CD8-positive, alpha-beta memory T cell (primary cell): ENCODE measurements at regions of chr17 and their contacts with region 1.

Region 1: GRCh38 chr17:63425482-63425881 is 20.6 kb downstream of the CYB561 start:
- DNase-seq: peak; percentile 50 to 78 (median 62)
- H3K4me3 ChIP-seq: no peak overlapping the region
- H3K4me3 Mint-ChIP-seq: peak overlapping the region; percentile 47 to 74 (median 62)
- H3K27ac ChIP-seq: no peak overlapping the region
- H3K27ac Mint-ChIP-seq: peak overlapping the region in 7 of 8 donors; percentile 31 to 81 (median 68)
- H3K4me1 ChIP-seq: peaks cover 36% of the 10 kb centered on the region
- H3K4me1 Mint-ChIP-seq: peaks cover 35 to 51% (median 37%) of the 10 kb centered on the region in 3 donors
- H3K27me3 ChIP-seq: no peaks in the 10 kb centered on the region
- H3K27me3 Mint-ChIP-seq: no peaks in the 10 kb centered on the region

Region 2: DNA sequence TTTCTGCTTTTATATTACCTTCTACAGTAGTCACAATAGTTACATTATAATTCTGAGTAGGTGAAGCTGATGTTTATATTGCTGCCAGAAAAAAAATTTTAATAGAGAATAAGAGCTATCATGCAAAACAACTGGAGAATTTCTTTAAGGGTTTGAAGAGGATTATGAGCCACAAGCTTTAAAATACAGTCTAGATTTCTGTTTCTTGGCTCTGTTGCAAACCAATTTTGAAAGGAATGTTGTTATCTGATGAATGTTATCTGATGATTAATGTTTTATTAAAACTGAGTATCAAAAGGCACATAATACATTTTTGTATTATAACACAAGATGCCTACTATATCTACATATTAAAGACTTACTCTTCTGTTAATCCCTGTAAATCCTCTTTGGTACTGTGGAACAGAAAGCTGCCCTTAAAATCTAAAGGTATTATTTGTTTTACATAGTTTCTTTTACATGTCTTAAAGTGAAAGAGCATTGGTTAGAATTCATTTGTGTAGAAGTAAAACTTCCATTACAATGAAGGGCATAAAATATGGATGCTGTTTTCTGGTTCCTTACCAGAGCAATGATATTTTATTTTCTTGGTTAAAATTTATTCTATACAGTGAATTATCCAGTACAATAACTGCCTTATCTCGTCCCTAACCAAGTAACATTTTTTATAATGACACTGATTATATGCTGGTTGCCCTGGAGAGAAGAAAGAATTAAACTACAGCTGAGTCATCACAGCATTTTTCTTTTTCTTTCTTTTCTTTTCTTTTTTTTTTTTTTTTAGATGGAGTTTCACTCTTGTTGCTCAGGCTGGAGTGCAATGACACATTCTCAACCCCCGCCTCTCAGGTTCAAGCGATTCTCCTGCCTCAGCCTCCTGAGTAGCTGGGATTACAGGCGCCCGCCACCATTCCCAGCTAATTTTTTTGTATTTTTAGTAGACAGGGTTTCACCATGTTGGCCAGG is 253.8 kb before region 1 on chr17:
- CTCF ChIA-PET with region 1: no interaction called
- POLR2A ChIA-PET with region 1: no interaction called
- DNase-seq: no peak
- H3K4me3 ChIP-seq: no peak overlapping the region
- H3K4me3 Mint-ChIP-seq: no peak overlapping the region
- H3K27ac ChIP-seq: no peak overlapping the region
- H3K27ac Mint-ChIP-seq: no peak overlapping the region
- H3K4me1 ChIP-seq: no peaks in the 10 kb centered on the region
- H3K4me1 Mint-ChIP-seq: no peaks in the 10 kb centered on the region
- H3K27me3 ChIP-seq: no peaks in the 10 kb centered on the region
- H3K27me3 Mint-ChIP-seq: no peaks in the 10 kb centered on the region

Region 3: DNA sequence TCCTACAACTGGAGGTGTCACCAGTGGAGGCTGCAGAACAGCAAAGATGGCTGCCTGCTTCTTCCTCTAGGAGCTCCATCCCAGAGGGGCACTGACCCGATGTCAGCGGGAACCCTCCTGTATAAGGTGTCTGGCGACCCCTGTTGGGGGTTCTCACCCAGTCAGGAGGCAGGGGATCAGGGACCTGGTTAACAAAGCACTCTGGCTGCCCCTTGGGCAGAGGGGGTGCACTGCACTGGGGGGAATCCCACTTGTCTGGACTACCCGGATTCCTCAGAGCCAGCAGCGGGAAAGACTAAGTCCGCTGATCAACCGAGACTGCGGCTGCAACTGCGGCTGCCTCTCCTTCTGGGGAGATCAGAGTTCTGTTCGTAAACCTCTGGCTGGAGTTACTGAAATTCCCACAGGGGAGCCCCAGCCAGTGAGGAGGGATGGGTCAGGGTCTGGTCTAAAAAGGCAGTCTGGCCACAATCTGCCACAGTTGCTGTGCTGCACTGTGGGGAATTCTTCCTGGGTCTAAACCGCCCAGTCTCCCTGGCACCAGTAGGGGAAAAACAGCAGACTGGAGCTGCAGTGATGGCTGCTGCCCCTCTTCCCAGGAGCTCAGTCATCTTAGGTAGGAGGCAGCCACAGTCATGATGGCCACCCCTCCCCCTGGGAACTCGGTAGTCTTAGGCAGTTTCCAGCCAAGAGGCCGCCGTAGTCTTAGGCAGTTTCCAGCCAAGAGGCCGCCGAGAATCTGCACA is 192.7 kb before region 1 on chr17:
- CTCF ChIA-PET with region 1: no interaction called
- POLR2A ChIA-PET with region 1: no interaction called
- DNase-seq: no peak
- H3K4me3 ChIP-seq: no peak overlapping the region
- H3K4me3 Mint-ChIP-seq: no peak overlapping the region
- H3K27ac ChIP-seq: no peak overlapping the region
- H3K27ac Mint-ChIP-seq: no peak overlapping the region
- H3K4me1 ChIP-seq: no peaks in the 10 kb centered on the region
- H3K4me1 Mint-ChIP-seq: no peaks in the 10 kb centered on the region
- H3K27me3 ChIP-seq: no peaks in the 10 kb centered on the region
- H3K27me3 Mint-ChIP-seq: peaks cover 1 to 12% of the 10 kb centered on the region in 2 donors

Region 4: GRCh38 chr17:63356337-63356757 is 69.1 kb before region 1 on chr17:
- CTCF ChIA-PET with region 1: no interaction called
- POLR2A ChIA-PET with region 1: no interaction called
- DNase-seq: no peak
- H3K4me3 ChIP-seq: no peak overlapping the region
- H3K4me3 Mint-ChIP-seq: no peak overlapping the region
- H3K27ac ChIP-seq: no peak overlapping the region
- H3K27ac Mint-ChIP-seq: no peak overlapping the region
- H3K4me1 ChIP-seq: no peaks in the 10 kb centered on the region
- H3K4me1 Mint-ChIP-seq: no peaks in the 10 kb centered on the region
- H3K27me3 ChIP-seq: no peaks in the 10 kb centered on the region
- H3K27me3 Mint-ChIP-seq: peaks cover 0 to 3% of the 10 kb centered on the region in 2 donors

Region 5: GRCh38 chr17:63369233-63369632 is 56.2 kb before region 1 on chr17:
- CTCF ChIA-PET with region 1: no interaction called
- POLR2A ChIA-PET with region 1: no interaction called
- DNase-seq: no peak
- H3K4me3 ChIP-seq: no peak overlapping the region
- H3K4me3 Mint-ChIP-seq: no peak overlapping the region
- H3K27ac ChIP-seq: no peak overlapping the region
- H3K27ac Mint-ChIP-seq: no peak overlapping the region
- H3K4me1 ChIP-seq: no peaks in the 10 kb centered on the region
- H3K4me1 Mint-ChIP-seq: no peaks in the 10 kb centered on the region
- H3K27me3 ChIP-seq: no peaks in the 10 kb centered on the region
- H3K27me3 Mint-ChIP-seq: no peaks in the 10 kb centered on the region

Region 6: GRCh38 chr17:63406689-63407330 is 18.7 kb before region 1 on chr17:
- CTCF ChIA-PET with region 1: interaction called, 16 read pairs
- POLR2A ChIA-PET with region 1: interaction called, 8 read pairs
- DNase-seq: peak; percentile 33 to 74 (median 53)
- H3K4me3 ChIP-seq: no peak overlapping the region
- H3K4me3 Mint-ChIP-seq: no peak overlapping the region
- H3K27ac ChIP-seq: no peak overlapping the region
- H3K27ac Mint-ChIP-seq: peak overlapping the region in 4 of 8 donors; percentile 43 to 67 (median 48)
- H3K4me1 ChIP-seq: no peaks in the 10 kb centered on the region
- H3K4me1 Mint-ChIP-seq: peaks cover 2 to 8% (median 8%) of the 10 kb centered on the region in 3 donors
- H3K27me3 ChIP-seq: no peaks in the 10 kb centered on the region
- H3K27me3 Mint-ChIP-seq: no peaks in the 10 kb centered on the region

Region 7: GRCh38 chr17:63445979-63446691 is 20.7 kb after region 1 on chr17 and contains the start of gene CYB561:
- CTCF ChIA-PET with region 1: interaction called, 31 read pairs
- POLR2A ChIA-PET with region 1: interaction called, 17 read pairs
- DNase-seq: peak; percentile 59 to 86 (median 75)
- H3K4me3 ChIP-seq: peak within 1 kb of the TSS; percentile 65
- H3K4me3 Mint-ChIP-seq: peak within 1 kb of the TSS; percentile 82 to 98 (median 84)
- H3K27ac ChIP-seq: peak within 1 kb of the TSS; percentile 87
- H3K27ac Mint-ChIP-seq: peak within 1 kb of the TSS; percentile 90 to 99 (median 96)
- H3K4me1 ChIP-seq: peaks cover 20% of the 10 kb centered on the region
- H3K4me1 Mint-ChIP-seq: peaks cover 24 to 61% (median 36%) of the 10 kb centered on the region in 3 donors
- H3K27me3 ChIP-seq: no peaks in the 10 kb centered on the region
- H3K27me3 Mint-ChIP-seq: peaks cover 0 to 4% of the 10 kb centered on the region in 2 donors
- total RNA-seq, gene CYB561: 14.3 to 16.6 TPM

Region 8: GRCh38 chr17:63478791-63479494 is 53.5 kb after region 1 on chr17:
- CTCF ChIA-PET with region 1: interaction called, 206 read pairs
- POLR2A ChIA-PET with region 1: interaction called, 9 read pairs
- DNase-seq: peak; percentile 54 to 87 (median 70)
- H3K4me3 ChIP-seq: no peak overlapping the region
- H3K4me3 Mint-ChIP-seq: peak overlapping the region in 6 of 7 donors; percentile 67 to 87 (median 72)
- H3K27ac ChIP-seq: no peak overlapping the region
- H3K27ac Mint-ChIP-seq: peak overlapping the region in 2 of 8 donors; percentile 51 to 74
- H3K4me1 ChIP-seq: peaks cover 14% of the 10 kb centered on the region
- H3K4me1 Mint-ChIP-seq: peaks cover 14 to 31% (median 14%) of the 10 kb centered on the region in 3 donors
- H3K27me3 ChIP-seq: peaks cover 7% of the 10 kb centered on the region
- H3K27me3 Mint-ChIP-seq: peaks cover 7 to 9% of the 10 kb centered on the region in 2 donors

Region 9: GRCh38 chr17:63621766-63622519 is 196.5 kb after region 1 on chr17 and contains the start of gene MAP3K3:
- CTCF ChIA-PET with region 1: interaction called, 10 read pairs
- POLR2A ChIA-PET with region 1: no interaction called
- DNase-seq: peak; percentile 94 to 98 (median 97)
- H3K4me3 ChIP-seq: peak within 1 kb of the TSS; percentile 70
- H3K4me3 Mint-ChIP-seq: peak within 1 kb of the TSS; percentile 95 to 99 (median 98)
- H3K27ac ChIP-seq: peak within 1 kb of the TSS; percentile 55
- H3K27ac Mint-ChIP-seq: peak within 1 kb of the TSS; percentile 71 to 95 (median 91)
- H3K4me1 ChIP-seq: peaks cover 36% of the 10 kb centered on the region
- H3K4me1 Mint-ChIP-seq: peaks cover 44 to 47% (median 46%) of the 10 kb centered on the region in 3 donors
- H3K27me3 ChIP-seq: no peaks in the 10 kb centered on the region
- H3K27me3 Mint-ChIP-seq: peaks cover 0 to 1% of the 10 kb centered on the region in 2 donors
- total RNA-seq, gene MAP3K3: 34.7 to 35.8 TPM

Region 10: DNA sequence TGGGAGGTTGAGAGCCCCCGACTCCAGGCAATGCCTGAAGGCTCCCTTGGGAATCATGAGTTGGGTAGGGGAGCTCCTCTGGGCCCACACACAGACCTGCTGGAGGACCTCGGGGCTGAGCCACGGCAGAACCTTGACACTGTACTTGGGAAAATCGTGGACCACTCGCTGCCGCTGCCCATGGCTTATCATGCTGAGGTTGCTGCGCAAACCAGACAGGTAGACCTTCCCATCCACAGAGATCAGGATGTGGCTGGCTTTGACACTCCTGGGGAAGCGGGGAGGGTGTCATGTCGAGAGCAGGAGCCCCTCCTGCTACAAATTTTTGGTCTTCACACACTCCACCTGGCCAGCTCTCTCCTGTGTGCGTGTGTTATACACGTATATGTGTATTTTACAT is 281.7 kb after region 1 on chr17:
- CTCF ChIA-PET with region 1: interaction called, 12 read pairs
- POLR2A ChIA-PET with region 1: no interaction called
- DNase-seq: peak in 4 of 5 donors; percentile 21 to 67 (median 61)
- H3K4me3 ChIP-seq: peak overlapping the region; percentile 55
- H3K4me3 Mint-ChIP-seq: peak overlapping the region; percentile 79 to 88 (median 84)
- H3K27ac ChIP-seq: peak overlapping the region; percentile 62
- H3K27ac Mint-ChIP-seq: peak overlapping the region; percentile 80 to 99 (median 95)
- H3K4me1 ChIP-seq: peaks cover 86% of the 10 kb centered on the region
- H3K4me1 Mint-ChIP-seq: peaks cover 70 to 85% (median 74%) of the 10 kb centered on the region in 3 donors
- H3K27me3 ChIP-seq: no peaks in the 10 kb centered on the region
- H3K27me3 Mint-ChIP-seq: no peaks in the 10 kb centered on the region